ENCODE measurements at regions of chr9 and their contacts with region 1.

Region 1: DNA sequence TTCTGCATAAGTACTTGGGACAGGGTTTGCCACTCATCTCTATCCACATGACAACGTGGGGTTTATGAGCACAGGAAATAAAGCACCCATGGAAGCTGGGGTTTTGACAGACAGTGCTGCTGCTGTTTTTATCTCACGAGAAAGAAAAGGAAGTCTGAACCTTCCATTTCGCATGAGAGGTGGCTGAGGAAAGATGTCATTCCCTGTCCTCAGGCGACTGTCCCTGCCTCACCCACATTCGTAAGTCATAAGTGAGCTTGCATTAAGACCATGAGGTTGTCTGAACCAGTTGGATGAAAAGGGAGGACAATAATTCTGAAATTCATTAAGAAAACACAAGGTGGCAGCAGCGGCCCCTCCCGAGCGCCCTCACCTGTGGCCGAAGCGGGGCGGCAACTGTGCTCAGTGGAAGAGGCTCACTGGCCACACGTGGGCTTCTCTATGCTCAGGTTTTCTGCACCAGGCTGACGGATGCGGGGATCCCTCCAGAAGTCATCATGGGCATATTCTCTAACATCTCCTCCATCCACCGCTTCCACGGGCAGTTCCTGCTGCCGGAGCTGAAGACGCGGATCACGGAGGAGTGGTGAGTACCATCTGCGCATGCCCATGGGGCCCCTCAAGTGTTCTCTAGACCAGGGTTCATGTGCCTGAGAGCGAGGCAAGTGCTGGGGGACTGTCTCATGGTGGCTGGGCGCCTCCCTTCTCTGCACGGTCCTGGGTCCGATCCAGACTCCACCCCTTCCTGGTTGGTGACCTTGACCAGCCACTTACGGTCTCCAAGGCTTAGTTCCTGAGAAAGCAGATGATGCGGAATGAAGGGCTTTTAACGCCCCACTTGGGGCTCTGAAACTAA is 54.7 kb upstream of the SUSD3 start:
- DNase-seq: peak; percentile 35 to 74 (median 57)
- H3K4me3 ChIP-seq: no peak overlapping the region
- H3K4me3 Mint-ChIP-seq: peak overlapping the region in 3 of 7 donors; percentile 41 to 44 (median 44)
- H3K27ac ChIP-seq: no peak overlapping the region
- H3K27ac Mint-ChIP-seq: peak overlapping the region; percentile 86 to 99 (median 92)
- H3K4me1 ChIP-seq: peaks cover 48% of the 10 kb centered on the region
- H3K4me1 Mint-ChIP-seq: peaks cover 47 to 63% (median 52%) of the 10 kb centered on the region in 3 donors
- H3K27me3 ChIP-seq: no peaks in the 10 kb centered on the region
- H3K27me3 Mint-ChIP-seq: no peaks in the 10 kb centered on the region

Region 2: DNA sequence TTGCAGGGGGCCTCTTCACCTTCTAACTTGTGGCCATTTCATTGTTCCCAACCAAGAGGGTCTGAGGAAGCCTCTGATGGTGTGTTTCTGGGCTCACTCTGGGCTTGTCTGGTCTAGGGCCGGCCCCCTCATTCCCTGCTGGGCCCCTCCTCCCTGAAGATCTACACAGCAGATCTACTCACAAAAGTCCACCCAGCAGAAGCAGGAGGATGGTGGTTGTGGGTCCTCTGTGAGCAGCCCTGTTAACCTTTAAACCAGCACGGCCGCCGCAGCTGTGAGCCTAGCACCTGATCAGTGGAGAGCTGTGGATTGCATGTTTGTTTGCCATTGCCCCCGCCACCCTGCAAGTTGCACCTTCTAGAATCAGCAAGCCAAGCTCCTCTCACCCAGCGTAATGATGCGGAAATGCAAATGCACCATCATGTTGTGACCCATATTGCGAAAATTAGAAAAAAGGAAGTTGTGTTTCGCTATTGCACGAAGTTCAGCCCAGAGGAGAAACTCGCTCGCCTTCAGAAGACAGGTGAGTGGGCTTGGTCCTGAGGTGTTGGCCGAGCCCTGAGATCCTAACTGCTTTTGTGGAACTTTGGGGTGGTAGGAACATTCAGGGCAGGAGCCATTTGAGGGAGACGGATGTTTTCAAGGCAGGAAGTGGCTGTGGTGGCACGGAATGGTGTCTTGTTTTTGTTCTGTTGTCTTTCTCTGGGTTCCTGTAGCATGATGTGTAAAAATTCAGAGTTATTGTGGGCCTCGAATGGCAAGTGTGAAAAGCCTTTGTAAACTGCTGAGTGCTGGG is 39.8 kb before region 1 on chr9:
- CTCF ChIA-PET with region 1: interaction called, 24 read pairs
- POLR2A ChIA-PET with region 1: interaction called, 4 read pairs
- DNase-seq: peak; percentile 64 to 93 (median 89)
- H3K4me3 ChIP-seq: peak overlapping the region; percentile 73
- H3K4me3 Mint-ChIP-seq: peak overlapping the region; percentile 91 to 95 (median 93)
- H3K27ac ChIP-seq: peak overlapping the region; percentile 90
- H3K27ac Mint-ChIP-seq: peak overlapping the region; percentile 92 to 99 (median 98)
- H3K4me1 ChIP-seq: peaks cover 71% of the 10 kb centered on the region
- H3K4me1 Mint-ChIP-seq: peaks cover 61 to 69% (median 67%) of the 10 kb centered on the region in 3 donors
- H3K27me3 ChIP-seq: no peaks in the 10 kb centered on the region
- H3K27me3 Mint-ChIP-seq: peaks cover 0 to 1% of the 10 kb centered on the region in 2 donors

Region 3: DNA sequence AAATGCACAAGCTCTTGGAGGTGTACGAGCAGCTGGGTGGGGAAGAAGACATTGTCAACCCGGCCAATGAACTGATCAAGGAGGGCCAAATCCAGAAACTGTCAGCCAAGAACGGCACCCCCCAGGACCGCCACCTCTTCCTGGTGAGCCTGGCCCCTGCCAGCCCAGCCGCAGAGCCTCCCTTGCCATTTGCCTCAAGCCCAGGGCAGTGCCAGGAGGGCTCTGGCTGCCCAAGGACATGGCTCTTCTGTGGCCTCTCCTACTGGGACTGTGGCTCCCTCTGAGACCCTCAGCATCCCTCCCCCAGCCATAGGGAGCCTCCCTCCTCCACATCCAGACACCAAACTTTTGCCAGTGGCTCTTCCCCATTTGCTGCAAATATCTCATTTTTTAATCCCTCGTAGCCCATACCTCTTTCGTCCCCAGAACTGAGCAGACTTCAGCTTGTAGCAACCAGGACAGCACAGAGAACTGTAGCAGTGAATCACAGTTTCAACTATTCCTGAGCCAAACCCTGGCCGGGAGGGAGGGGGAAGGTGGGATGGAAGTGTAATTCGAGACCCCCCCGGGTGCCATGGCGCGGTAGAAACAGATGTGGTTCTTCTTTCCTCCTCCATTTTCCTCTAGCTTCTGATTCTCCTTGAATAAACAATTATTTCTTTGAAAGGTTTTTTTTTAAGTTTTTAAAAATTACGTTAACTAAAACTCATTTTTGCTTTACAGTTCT is 10.2 kb after region 1 on chr9:
- CTCF ChIA-PET with region 1: interaction called, 46 read pairs
- POLR2A ChIA-PET with region 1: interaction called, 3 read pairs
- DNase-seq: no peak
- H3K4me3 ChIP-seq: no peak overlapping the region
- H3K4me3 Mint-ChIP-seq: no peak overlapping the region
- H3K27ac ChIP-seq: no peak overlapping the region
- H3K27ac Mint-ChIP-seq: peak overlapping the region in 6 of 8 donors; percentile 32 to 87 (median 58)
- H3K4me1 ChIP-seq: no peaks in the 10 kb centered on the region
- H3K4me1 Mint-ChIP-seq: peaks cover 2 to 13% (median 6%) of the 10 kb centered on the region in 3 donors
- H3K27me3 ChIP-seq: no peaks in the 10 kb centered on the region
- H3K27me3 Mint-ChIP-seq: peaks cover 0 to 1% of the 10 kb centered on the region in 2 donors

Region 4: DNA sequence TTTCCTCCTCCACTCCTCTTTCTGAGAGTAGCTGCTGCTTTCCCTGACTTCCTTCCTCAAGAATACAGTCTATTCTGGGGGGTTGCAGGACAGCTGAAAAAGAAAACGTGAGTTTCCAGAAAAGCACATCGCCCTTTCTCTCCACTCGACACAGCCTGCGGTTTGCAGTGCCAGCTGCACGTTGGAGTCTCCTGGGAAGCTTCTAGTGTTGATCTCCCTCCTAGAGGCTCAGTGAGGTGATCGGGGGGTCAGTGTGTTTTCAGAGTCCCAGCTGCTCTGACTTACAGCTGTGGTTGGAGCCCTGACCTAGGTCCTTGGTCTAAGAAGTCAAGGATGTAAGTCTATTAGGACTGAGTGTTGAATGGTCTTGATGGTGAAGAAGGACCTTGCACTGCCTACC is 29.8 kb after region 1 on chr9:
- CTCF ChIA-PET with region 1: interaction called, 52 read pairs
- POLR2A ChIA-PET with region 1: interaction called, 5 read pairs
- DNase-seq: no peak
- H3K4me3 ChIP-seq: no peak overlapping the region
- H3K4me3 Mint-ChIP-seq: peak overlapping the region in 1 of 7 donors; percentile 13
- H3K27ac ChIP-seq: no peak overlapping the region
- H3K27ac Mint-ChIP-seq: peak overlapping the region; percentile 10 to 92 (median 80)
- H3K4me1 ChIP-seq: peaks cover 55% of the 10 kb centered on the region
- H3K4me1 Mint-ChIP-seq: peaks cover 42 to 80% (median 44%) of the 10 kb centered on the region in 3 donors
- H3K27me3 ChIP-seq: no peaks in the 10 kb centered on the region
- H3K27me3 Mint-ChIP-seq: peaks cover 0 to 2% of the 10 kb centered on the region in 2 donors